ENCODE measurements at regions of chr15 and their contacts with region 1.

Region 1: GRCh38 chr15:89776274-89777072 is at the start of gene MESP2:
- DNase-seq: peak; percentile 84 to 91
- ATAC-seq: peak; percentile 91 to 97 (median 94)
- H3K4me3 ChIP-seq: peak within 1 kb of the TSS; percentile 17 to 57 (median 50)
- H3K27ac ChIP-seq: peak within 1 kb of the TSS in 5 of 10 donors; percentile 40 to 53 (median 43)
- H3K4me1 ChIP-seq: peaks cover 7 to 33% (median 14%) of the 10 kb centered on the region in 9 donors
- H3K27me3 ChIP-seq: peaks cover 0 to 14% (median 0%) of the 10 kb centered on the region in 7 donors
- CTCF ChIP-seq: peak in 8 of 9 donors; percentile 27 to 70 (median 50)
- total RNA-seq, gene MESP2: 0.21 to 0.52 (median 0.32) TPM in 5 of 10 donors, not detected in the others

Region 2: GRCh38 chr15:89057504-89058133 is 718.9 kb before region 1 on chr15:
- intact Hi-C with region 1: no loop called
- DNase-seq: peak; percentile 81 to 86
- ATAC-seq: peak; percentile 87 to 94 (median 92)
- H3K4me3 ChIP-seq: no peak overlapping the region
- H3K27ac ChIP-seq: no peak overlapping the region
- H3K4me1 ChIP-seq: peaks cover 0 to 12% (median 6%) of the 10 kb centered on the region in 9 donors
- H3K27me3 ChIP-seq: no peaks in the 10 kb centered on the region
- CTCF ChIP-seq: peak; percentile 98 to 99 (median 99)

Region 3: GRCh38 chr15:89367485-89368451 is 408.7 kb before region 1 on chr15:
- intact Hi-C with region 1: no loop called
- DNase-seq: no peak
- ATAC-seq: peak in 1 of 8 donors; percentile 26
- H3K4me3 ChIP-seq: peak overlapping the region in 7 of 10 donors; percentile 5 to 34 (median 8)
- H3K27ac ChIP-seq: no peak overlapping the region
- H3K4me1 ChIP-seq: peaks cover 0 to 41% (median 18%) of the 10 kb centered on the region in 9 donors
- H3K27me3 ChIP-seq: peaks cover 74 to 100% (median 100%) of the 10 kb centered on the region in 7 donors
- CTCF ChIP-seq: no peak

Region 4: GRCh38 chr15:89665449-89666181 is 110.9 kb before region 1 on chr15:
- intact Hi-C with region 1: no loop called
- DNase-seq: peak; percentile 61 to 76
- ATAC-seq: peak; percentile 57 to 89 (median 71)
- H3K4me3 ChIP-seq: peak overlapping the region in 9 of 10 donors; percentile 22 to 60 (median 57)
- H3K27ac ChIP-seq: peak overlapping the region; percentile 82 to 96 (median 90)
- H3K4me1 ChIP-seq: peaks cover 12 to 31% (median 27%) of the 10 kb centered on the region in 9 donors
- H3K27me3 ChIP-seq: peaks cover 0 to 10% (median 0%) of the 10 kb centered on the region in 7 donors
- CTCF ChIP-seq: no peak

Region 5: GRCh38 chr15:89794627-89795241 is 18.3 kb after region 1 on chr15:
- intact Hi-C with region 1: no loop called
- DNase-seq: peak in 1 of 2 donors; percentile 54
- ATAC-seq: peak in 6 of 8 donors; percentile 28 to 76 (median 60)
- H3K4me3 ChIP-seq: no peak overlapping the region
- H3K27ac ChIP-seq: peak overlapping the region in 4 of 10 donors; percentile 16 to 59 (median 36)
- H3K4me1 ChIP-seq: peaks cover 0 to 16% (median 10%) of the 10 kb centered on the region in 9 donors
- H3K27me3 ChIP-seq: no peaks in the 10 kb centered on the region
- CTCF ChIP-seq: no peak

Region 6: DNA sequence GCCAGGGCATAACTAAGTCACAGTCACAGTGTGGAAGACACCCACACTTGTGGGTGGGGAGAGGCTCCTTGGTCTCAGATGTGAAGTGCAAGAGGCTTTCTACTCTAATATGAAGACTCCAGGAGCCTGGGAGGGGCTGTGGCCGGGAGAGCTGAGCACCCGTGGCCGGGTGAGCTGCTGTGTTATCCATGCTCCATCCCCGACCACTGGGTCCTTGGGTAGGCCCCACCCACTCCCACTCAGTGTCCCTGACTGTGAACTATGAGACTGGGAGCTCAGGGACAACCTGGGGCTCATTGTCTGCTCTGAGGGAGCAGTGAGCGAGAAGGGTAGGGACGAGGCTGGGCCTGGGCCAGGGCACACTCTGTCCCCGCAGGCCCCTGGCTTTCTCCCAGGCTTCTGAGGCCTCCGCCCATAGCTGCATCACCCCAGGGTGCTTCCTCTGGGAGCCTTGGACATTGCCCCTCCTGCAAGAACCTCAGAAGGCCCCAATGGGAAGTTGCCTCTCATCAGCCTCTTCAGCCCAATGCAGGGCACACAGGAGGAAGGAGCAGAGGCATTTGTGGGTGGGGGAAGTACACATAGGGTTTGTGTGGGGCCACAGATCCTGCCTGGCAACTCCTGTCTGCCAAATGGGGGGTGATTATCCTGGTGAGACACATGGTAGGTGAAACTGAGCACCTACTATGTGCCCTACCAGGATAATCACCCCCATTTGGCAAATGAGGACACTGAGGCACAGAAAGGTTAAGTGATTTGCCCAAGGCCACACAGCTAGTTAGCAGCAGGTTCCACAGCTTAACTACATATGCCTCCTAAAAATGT is 35.8 kb after region 1 on chr15:
- intact Hi-C with region 1: loop called in 1 of 10 experiments (anchors 5 kb)
- DNase-seq: peak in 1 of 2 donors; percentile 71
- ATAC-seq: peak in 7 of 8 donors; percentile 26 to 90 (median 70)
- H3K4me3 ChIP-seq: peak overlapping the region in 1 of 10 donors; percentile 72
- H3K27ac ChIP-seq: peak overlapping the region in 2 of 10 donors; percentile 19 to 95
- H3K4me1 ChIP-seq: peaks cover 0 to 41% (median 25%) of the 10 kb centered on the region in 9 donors
- H3K27me3 ChIP-seq: peaks cover 3 to 43% (median 36%) of the 10 kb centered on the region in 7 donors
- CTCF ChIP-seq: no peak

Measured in heart right ventricle (tissue), 16 donors.